Heart right ventricle (tissue), 16 donors: ENCODE measurements at regions of chr18 and their contacts with region 1.

Region 1: GRCh38 chr18:3839481-3840075 is 389.6 kb downstream of the TGIF1 start:
- DNase-seq: no peak
- ATAC-seq: no peak
- H3K4me3 ChIP-seq: no peak overlapping the region
- H3K27ac ChIP-seq: no peak overlapping the region
- H3K4me1 ChIP-seq: no peaks in the 10 kb centered on the region
- H3K27me3 ChIP-seq: no peaks in the 10 kb centered on the region
- CTCF ChIP-seq: no peak

Region 2: GRCh38 chr18:3525870-3526420 is 313.6 kb before region 1 on chr18:
- intact Hi-C with region 1: no loop called
- DNase-seq: no peak
- ATAC-seq: peak in 3 of 8 donors; percentile 13 to 45 (median 16)
- H3K4me3 ChIP-seq: peak overlapping the region in 1 of 10 donors; percentile 12
- H3K27ac ChIP-seq: peak overlapping the region in 4 of 10 donors; percentile 26 to 43 (median 32)
- H3K4me1 ChIP-seq: peaks cover 0 to 20% (median 10%) of the 10 kb centered on the region in 9 donors
- H3K27me3 ChIP-seq: no peaks in the 10 kb centered on the region
- CTCF ChIP-seq: no peak

Region 3: GRCh38 chr18:3782901-3783300 is 56.7 kb before region 1 on chr18:
- intact Hi-C with region 1: loop called in 1 of 10 experiments (anchors 10 kb)
- DNase-seq: no peak
- ATAC-seq: no peak
- H3K4me3 ChIP-seq: no peak overlapping the region
- H3K27ac ChIP-seq: no peak overlapping the region
- H3K4me1 ChIP-seq: no peaks in the 10 kb centered on the region
- H3K27me3 ChIP-seq: no peaks in the 10 kb centered on the region
- CTCF ChIP-seq: no peak